ENCODE measurements at regions of chr7 and their contacts with region 1.

Region 1: DNA sequence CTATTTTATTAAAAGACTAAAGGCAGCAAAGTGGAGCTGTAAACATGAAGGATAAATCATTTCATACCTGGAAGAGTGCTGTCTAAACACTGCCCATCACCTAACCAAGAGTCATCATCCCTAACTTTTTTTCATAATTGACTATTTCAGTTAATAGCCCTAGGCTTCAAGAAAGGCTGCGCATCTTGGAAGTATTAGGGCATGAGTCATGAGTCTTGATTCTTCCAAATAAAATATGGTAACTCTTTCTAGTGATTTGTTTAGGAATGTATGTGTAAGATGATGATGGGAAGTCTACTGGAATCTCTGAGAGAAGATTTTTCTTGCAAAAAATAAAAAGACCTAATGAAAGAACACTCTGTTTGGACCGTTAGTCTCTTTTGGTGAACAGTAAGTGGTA is 207.7 kb upstream of the AHR start:
- DNase-seq: peak; percentile 86
- ATAC-seq: peak; percentile 96
- H3K4me3 ChIP-seq: no peak overlapping the region
- H3K27ac ChIP-seq: no peak overlapping the region
- H3K4me1 ChIP-seq: no peaks in the 10 kb centered on the region
- H3K27me3 ChIP-seq: no peaks in the 10 kb centered on the region
- CTCF ChIP-seq: no peak
- POLR2A ChIP-seq: no peak
- RAD21 ChIP-seq: no peak

Region 2: DNA sequence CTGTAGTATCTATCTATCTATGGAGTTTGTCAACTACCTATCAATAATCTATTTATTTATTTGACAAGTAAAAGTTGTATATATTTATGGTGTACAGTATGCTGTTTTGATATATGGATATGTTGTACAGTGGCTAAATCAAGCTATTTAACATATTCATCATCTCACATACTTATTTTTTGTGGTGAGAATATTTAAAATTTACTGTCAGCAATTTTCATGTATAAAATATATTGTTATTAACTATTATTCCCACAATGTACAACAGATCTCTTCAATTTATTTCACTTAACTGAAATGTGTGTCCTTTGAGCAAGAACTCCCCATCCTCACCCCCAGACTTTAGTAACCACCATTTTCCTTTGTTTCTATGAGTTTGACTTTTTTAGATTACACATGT is 223.4 kb before region 1 on chr7:
- CTCF ChIA-PET with region 1: no interaction called
- POLR2A ChIA-PET with region 1: no interaction called
- dilution Hi-C with region 1: no loop called
- in situ Hi-C with region 1: no loop called
- intact Hi-C with region 1: no loop called
- DNase-seq: no peak
- ATAC-seq: no peak
- H3K4me3 ChIP-seq: no peak overlapping the region
- H3K27ac ChIP-seq: no peak overlapping the region
- H3K4me1 ChIP-seq: no peaks in the 10 kb centered on the region
- H3K27me3 ChIP-seq: peaks cover 5% of the 10 kb centered on the region; the same call in 1 of the 2 replicates
- CTCF ChIP-seq: no peak
- POLR2A ChIP-seq: no peak
- RAD21 ChIP-seq: no peak

Region 3: GRCh38 chr7:17123020-17123419 is 32.3 kb after region 1 on chr7:
- CTCF ChIA-PET with region 1: no interaction called
- POLR2A ChIA-PET with region 1: no interaction called
- dilution Hi-C with region 1: no loop called
- in situ Hi-C with region 1: no loop called
- intact Hi-C with region 1: loop called (anchors 2 kb)
- DNase-seq: peak; percentile 94
- ATAC-seq: peak; percentile 93
- H3K4me3 ChIP-seq: no peak overlapping the region
- H3K27ac ChIP-seq: peak overlapping the region; percentile 57; the same call in 1 of the 2 replicates
- H3K4me1 ChIP-seq: no peaks in the 10 kb centered on the region; the same call in 1 of the 2 replicates
- H3K27me3 ChIP-seq: no peaks in the 10 kb centered on the region
- CTCF ChIP-seq: no peak
- POLR2A ChIP-seq: no peak
- RAD21 ChIP-seq: no peak

Region 4: GRCh38 chr7:17159500-17160037 is 68.8 kb after region 1 on chr7:
- CTCF ChIA-PET with region 1: no interaction called
- POLR2A ChIA-PET with region 1: no interaction called
- dilution Hi-C with region 1: no loop called
- in situ Hi-C with region 1: no loop called
- intact Hi-C with region 1: no loop called
- DNase-seq: no peak
- ATAC-seq: no peak
- H3K4me3 ChIP-seq: no peak overlapping the region
- H3K27ac ChIP-seq: no peak overlapping the region
- H3K4me1 ChIP-seq: no peaks in the 10 kb centered on the region
- H3K27me3 ChIP-seq: no peaks in the 10 kb centered on the region
- CTCF ChIP-seq: no peak
- POLR2A ChIP-seq: no peak
- RAD21 ChIP-seq: no peak

Region 5: DNA sequence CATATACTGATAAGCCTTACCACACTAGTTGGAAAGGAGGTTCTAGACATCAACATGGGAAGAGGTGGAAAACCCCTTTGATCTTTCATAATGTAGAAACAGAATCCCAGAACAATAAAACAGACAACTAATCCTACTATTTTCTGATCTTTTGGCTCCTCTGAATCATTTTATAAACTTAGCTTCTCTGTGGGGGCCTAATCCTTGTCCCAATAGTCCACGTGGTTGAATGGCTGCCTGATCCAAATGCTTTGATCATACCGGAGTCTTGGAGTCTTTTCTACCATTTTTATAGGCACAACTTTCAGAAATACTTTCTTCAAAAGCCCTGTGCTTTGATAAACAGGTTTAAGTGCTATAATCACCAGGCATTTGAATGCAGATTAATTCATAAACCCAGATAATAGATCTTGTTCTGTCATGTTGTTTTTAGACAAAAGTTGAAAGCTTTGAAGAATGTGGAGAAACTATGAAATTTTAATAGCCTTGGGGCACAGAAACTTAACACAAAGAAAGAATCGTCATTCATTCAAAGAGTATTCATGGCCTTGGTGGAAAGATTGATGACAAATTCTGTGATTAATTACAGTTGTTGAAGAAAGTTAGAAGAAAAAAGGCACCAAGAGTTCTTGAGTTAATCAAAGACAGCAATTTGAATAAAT is 371.4 kb after region 1 on chr7:
- CTCF ChIA-PET with region 1: no interaction called
- POLR2A ChIA-PET with region 1: no interaction called
- dilution Hi-C with region 1: no loop called
- in situ Hi-C with region 1: no loop called
- intact Hi-C with region 1: no loop called
- DNase-seq: no peak
- ATAC-seq: no peak
- H3K4me3 ChIP-seq: no peak overlapping the region
- H3K27ac ChIP-seq: no peak overlapping the region
- H3K4me1 ChIP-seq: no peaks in the 10 kb centered on the region
- H3K27me3 ChIP-seq: no peaks in the 10 kb centered on the region
- CTCF ChIP-seq: no peak
- POLR2A ChIP-seq: no peak
- RAD21 ChIP-seq: no peak

Measured in IMR-90 (cell line).